Heart right ventricle (tissue), 16 donors: ENCODE measurements at regions of chr10 and their contacts with region 1.

Region 1: GRCh38 chr10:60816628-60817397 is 38.5 kb downstream of the CDK1 start:
- DNase-seq: peak in 1 of 2 donors; percentile 72
- ATAC-seq: peak; percentile 76 to 95 (median 90)
- H3K4me3 ChIP-seq: peak overlapping the region in 4 of 10 donors; percentile 2 to 20 (median 13)
- H3K27ac ChIP-seq: peak overlapping the region in 5 of 10 donors; percentile 22 to 56 (median 34)
- H3K4me1 ChIP-seq: peaks cover 0 to 41% (median 20%) of the 10 kb centered on the region in 9 donors
- H3K27me3 ChIP-seq: no peaks in the 10 kb centered on the region
- CTCF ChIP-seq: peak; percentile 55 to 92 (median 82)

Region 2: DNA sequence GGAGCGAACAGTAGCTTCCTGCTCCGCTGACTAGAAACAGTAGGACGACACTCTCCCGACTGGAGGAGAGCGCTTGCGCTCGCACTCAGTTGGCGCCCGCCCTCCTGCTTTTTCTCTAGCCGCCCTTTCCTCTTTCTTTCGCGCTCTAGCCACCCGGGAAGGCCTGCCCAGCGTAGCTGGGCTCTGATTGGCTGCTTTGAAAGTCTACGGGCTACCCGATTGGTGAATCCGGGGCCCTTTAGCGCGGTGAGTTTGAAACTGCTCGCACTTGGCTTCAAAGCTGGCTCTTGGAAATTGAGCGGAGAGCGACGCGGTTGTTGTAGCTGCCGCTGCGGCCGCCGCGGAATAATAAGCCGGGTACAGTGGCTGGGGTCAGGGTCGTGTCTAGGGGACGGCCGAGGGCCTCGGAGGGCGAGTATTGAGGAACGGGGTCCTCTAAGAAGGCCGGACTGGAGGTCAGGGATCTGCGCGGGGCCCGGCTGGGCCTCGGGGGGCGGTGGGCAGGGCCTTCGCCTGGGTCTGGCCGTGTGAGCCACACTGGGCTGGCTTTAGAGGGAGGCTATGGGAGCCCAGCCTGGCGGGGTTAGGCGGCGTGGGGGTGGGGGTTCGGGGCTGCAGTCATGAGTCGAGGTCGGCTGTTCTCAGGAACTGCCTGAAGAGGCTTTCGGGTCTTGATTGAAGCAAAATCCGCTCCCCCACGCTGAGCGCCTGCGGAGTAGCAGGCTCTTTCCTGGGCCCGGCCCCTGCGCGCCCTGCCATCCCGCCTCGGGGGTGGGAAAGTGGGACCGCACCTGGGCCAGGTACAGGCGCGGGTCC is 38.4 kb before region 1 on chr10 and contains the start of gene CDK1:
- intact Hi-C with region 1: no loop called
- DNase-seq: peak; percentile 95 to 98
- ATAC-seq: peak; percentile 99 to 100 (median 100)
- H3K4me3 ChIP-seq: peak within 1 kb of the TSS; percentile 42 to 75 (median 64)
- H3K27ac ChIP-seq: peak within 1 kb of the TSS in 5 of 10 donors; percentile 4 to 82 (median 42)
- H3K4me1 ChIP-seq: peaks cover 3 to 36% (median 8%) of the 10 kb centered on the region in 9 donors
- H3K27me3 ChIP-seq: peaks cover 0 to 8% (median 0%) of the 10 kb centered on the region in 7 donors
- CTCF ChIP-seq: peak in 2 of 9 donors; percentile 4 to 16
- total RNA-seq, gene CDK1: 0.27 to 8.6 (median 1.0) TPM

Region 3: GRCh38 chr10:60870424-60870728 is 53.6 kb after region 1 on chr10:
- intact Hi-C with region 1: loop called in 1 of 10 experiments (anchors 10 kb)
- DNase-seq: no peak
- ATAC-seq: peak in 1 of 8 donors; percentile 39
- H3K4me3 ChIP-seq: no peak overlapping the region
- H3K27ac ChIP-seq: no peak overlapping the region
- H3K4me1 ChIP-seq: peaks cover 0 to 6% (median 0%) of the 10 kb centered on the region in 9 donors
- H3K27me3 ChIP-seq: no peaks in the 10 kb centered on the region
- CTCF ChIP-seq: peak in 4 of 9 donors; percentile 11 to 36 (median 16)

Region 4: GRCh38 chr10:60964257-60965235 is 147.7 kb after region 1 on chr10:
- intact Hi-C with region 1: loop called (anchors 1 to 5 kb)
- DNase-seq: peak; percentile 40 to 80
- ATAC-seq: peak in 7 of 8 donors; percentile 66 to 93 (median 90)
- H3K4me3 ChIP-seq: peak overlapping the region in 1 of 10 donors; percentile 2
- H3K27ac ChIP-seq: peak overlapping the region in 7 of 10 donors; percentile 39 to 62 (median 54)
- H3K4me1 ChIP-seq: peaks cover 0 to 25% (median 10%) of the 10 kb centered on the region in 9 donors
- H3K27me3 ChIP-seq: no peaks in the 10 kb centered on the region
- CTCF ChIP-seq: peak; percentile 70 to 92 (median 86)

Region 5: GRCh38 chr10:61140765-61141392 is 324.1 kb after region 1 on chr10:
- intact Hi-C with region 1: loop called in 4 of 10 experiments (anchors 5 to 10 kb)
- DNase-seq: peak in 1 of 2 donors; percentile 40
- ATAC-seq: peak in 4 of 8 donors; percentile 54 to 71 (median 66)
- H3K4me3 ChIP-seq: no peak overlapping the region
- H3K27ac ChIP-seq: no peak overlapping the region
- H3K4me1 ChIP-seq: peaks cover 0 to 19% (median 0%) of the 10 kb centered on the region in 9 donors
- H3K27me3 ChIP-seq: no peaks in the 10 kb centered on the region
- CTCF ChIP-seq: peak; percentile 57 to 87 (median 74)

Region 6: GRCh38 chr10:61197057-61197456 is 380.2 kb after region 1 on chr10:
- intact Hi-C with region 1: loop called in 1 of 10 experiments (anchors 10 kb)
- DNase-seq: no peak
- ATAC-seq: peak in 6 of 8 donors; percentile 61 to 84 (median 72)
- H3K4me3 ChIP-seq: no peak overlapping the region
- H3K27ac ChIP-seq: no peak overlapping the region
- H3K4me1 ChIP-seq: peaks cover 0 to 14% (median 5%) of the 10 kb centered on the region in 9 donors
- H3K27me3 ChIP-seq: no peaks in the 10 kb centered on the region
- CTCF ChIP-seq: no peak

Region 7: GRCh38 chr10:61448841-61449600 is 632.2 kb after region 1 on chr10:
- intact Hi-C with region 1: loop called in 1 of 10 experiments (anchors 10 kb)
- DNase-seq: no peak
- ATAC-seq: no peak
- H3K4me3 ChIP-seq: no peak overlapping the region
- H3K27ac ChIP-seq: no peak overlapping the region
- H3K4me1 ChIP-seq: peaks cover 0 to 19% (median 8%) of the 10 kb centered on the region in 9 donors
- H3K27me3 ChIP-seq: peaks cover 0 to 31% (median 22%) of the 10 kb centered on the region in 7 donors
- CTCF ChIP-seq: no peak